CD4-positive, alpha-beta memory T cell (primary cell): ENCODE measurements at regions of chr17 and their contacts with region 1.

Region 1: DNA sequence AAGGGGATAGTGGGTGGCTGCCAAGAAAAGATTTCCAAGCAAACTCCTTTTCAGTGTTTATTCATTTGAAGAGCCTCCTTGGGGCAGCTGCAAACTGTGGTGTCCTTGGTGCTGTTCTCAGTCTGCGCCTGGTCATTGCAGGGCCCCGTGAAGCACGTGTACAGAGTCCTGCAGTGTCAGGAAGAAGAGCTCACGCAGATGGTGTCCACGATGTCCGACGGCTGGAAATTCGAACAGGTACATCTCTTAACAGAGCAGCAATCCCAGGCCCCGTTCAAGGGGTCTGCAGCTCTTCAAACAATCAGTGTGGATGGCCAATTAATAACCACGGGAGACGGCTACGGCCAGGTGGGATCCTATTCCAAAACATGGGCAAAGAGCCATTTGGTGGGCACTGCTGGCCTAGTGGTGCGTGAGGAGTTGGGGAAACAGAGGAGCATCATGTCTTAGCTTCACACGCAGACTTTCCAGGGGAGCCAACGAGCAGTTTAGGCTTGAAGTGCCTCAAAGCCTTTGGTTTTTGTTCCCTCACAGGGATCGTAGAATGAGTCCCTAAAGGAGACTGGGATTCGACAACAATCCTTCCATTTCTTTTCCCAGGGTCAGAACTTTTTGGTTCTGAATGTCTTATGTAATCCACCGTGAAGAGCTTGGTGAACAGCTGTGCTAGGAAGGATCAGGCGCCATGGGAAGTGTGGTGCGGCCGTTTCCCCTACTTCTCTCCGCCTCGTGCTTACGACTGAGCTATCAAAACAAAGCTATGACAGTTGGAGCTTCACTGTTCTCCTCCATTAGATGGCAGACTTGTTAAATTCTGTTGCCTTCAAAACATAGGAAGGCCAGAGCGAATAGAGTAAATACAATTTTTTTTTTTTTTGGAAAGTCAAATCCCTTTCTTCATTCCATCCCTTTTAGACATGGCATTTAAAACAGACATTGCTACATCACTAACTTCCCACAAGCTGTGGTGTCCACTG is 12.6 kb downstream of the KCTD2 start:
- DNase-seq: peak in 2 of 5 donors; percentile 20 to 26
- H3K4me3 ChIP-seq: no peak overlapping the region
- H3K4me3 Mint-ChIP-seq: no peak overlapping the region
- H3K27ac ChIP-seq: no peak overlapping the region
- H3K27ac Mint-ChIP-seq: peak overlapping the region in 2 of 7 donors; percentile 61 to 78
- H3K4me1 ChIP-seq: no peaks in the 10 kb centered on the region
- H3K4me1 Mint-ChIP-seq: peaks cover 0 to 18% (median 8%) of the 10 kb centered on the region in 4 donors
- H3K27me3 ChIP-seq: no peaks in the 10 kb centered on the region
- H3K27me3 Mint-ChIP-seq: no peaks in the 10 kb centered on the region

Region 2: GRCh38 chr17:75069783-75070182 is 10.1 kb after region 1 on chr17:
- CTCF ChIA-PET with region 1: interaction called, 12 read pairs
- POLR2A ChIA-PET with region 1: interaction called, 5 read pairs
- intact Hi-C with region 1: no loop called
- DNase-seq: no peak
- H3K4me3 ChIP-seq: no peak overlapping the region
- H3K4me3 Mint-ChIP-seq: no peak overlapping the region
- H3K27ac ChIP-seq: no peak overlapping the region
- H3K27ac Mint-ChIP-seq: peak overlapping the region in 4 of 7 donors; percentile 25 to 62 (median 38)
- H3K4me1 ChIP-seq: peaks cover 21% of the 10 kb centered on the region
- H3K4me1 Mint-ChIP-seq: peaks cover 13 to 34% (median 23%) of the 10 kb centered on the region in 4 donors
- H3K27me3 ChIP-seq: no peaks in the 10 kb centered on the region
- H3K27me3 Mint-ChIP-seq: no peaks in the 10 kb centered on the region